Endothelial cell of umbilical vein (primary cell): ENCODE measurements at regions of chr11 and their contacts with region 1.

Region 1: DNA sequence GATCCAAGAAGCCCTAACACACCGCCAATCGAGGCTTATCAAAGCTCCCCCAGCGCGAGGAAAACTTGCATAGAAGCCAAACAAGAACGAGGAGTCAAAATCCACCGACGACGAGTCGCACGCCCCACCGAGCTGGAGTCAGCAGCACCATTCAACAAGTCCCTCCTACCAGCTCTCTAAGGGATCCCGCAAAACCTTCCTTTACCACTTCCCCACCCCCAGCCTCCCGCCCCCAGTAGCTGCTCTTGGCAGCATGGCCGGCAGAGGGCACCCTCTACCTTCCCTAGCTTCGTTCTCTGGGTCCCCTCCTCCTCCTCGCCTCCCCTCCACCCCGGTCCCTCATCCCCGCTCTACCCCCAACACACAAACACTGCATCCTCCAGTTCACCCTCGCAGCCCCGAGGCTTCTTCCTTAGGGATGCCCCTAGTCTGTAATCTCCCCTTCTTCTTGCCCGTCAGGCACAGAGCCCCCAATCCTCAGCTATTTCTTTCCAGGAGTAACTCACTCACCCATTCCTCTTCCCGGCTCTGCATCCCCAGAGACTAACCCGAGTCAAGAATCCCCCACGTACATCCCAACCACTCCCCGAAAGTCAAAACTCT is 1.3 kb downstream of the BDNF start:
- DNase-seq: peak; percentile 91
- H3K4me3 ChIP-seq: peak overlapping the region; percentile 75 to 92 (median 88)
- H3K27ac ChIP-seq: peak overlapping the region; percentile 60
- H3K4me1 ChIP-seq: peaks cover 19% of the 10 kb centered on the region
- H3K27me3 ChIP-seq: peaks cover 0 to 10% of the 10 kb centered on the region in 2 experiments
- CTCF ChIP-seq: peak; percentile 44 to 92
- POLR2A ChIP-seq: peak; percentile 65

Region 2: GRCh38 chr11:26377619-26378018 is 1321.4 kb before region 1 on chr11:
- CTCF ChIA-PET with region 1: no interaction called
- POLR2A ChIA-PET with region 1: no interaction called
- dilution Hi-C with region 1: no loop called
- intact Hi-C with region 1: no loop called
- DNase-seq: no peak
- H3K4me3 ChIP-seq: no peak overlapping the region
- H3K27ac ChIP-seq: no peak overlapping the region
- H3K4me1 ChIP-seq: no peaks in the 10 kb centered on the region
- H3K27me3 ChIP-seq: no peaks in the 10 kb centered on the region
- CTCF ChIP-seq: no peak
- POLR2A ChIP-seq: no peak

Region 3: GRCh38 chr11:27571156-27571825 is 127.7 kb before region 1 on chr11:
- CTCF ChIA-PET with region 1: no interaction called
- POLR2A ChIA-PET with region 1: no interaction called
- dilution Hi-C with region 1: no loop called
- intact Hi-C with region 1: no loop called
- DNase-seq: no peak
- H3K4me3 ChIP-seq: no peak overlapping the region
- H3K27ac ChIP-seq: no peak overlapping the region
- H3K4me1 ChIP-seq: no peaks in the 10 kb centered on the region
- H3K27me3 ChIP-seq: peaks cover 0 to 7% of the 10 kb centered on the region in 2 experiments
- CTCF ChIP-seq: no peak
- POLR2A ChIP-seq: no peak

Region 4: DNA sequence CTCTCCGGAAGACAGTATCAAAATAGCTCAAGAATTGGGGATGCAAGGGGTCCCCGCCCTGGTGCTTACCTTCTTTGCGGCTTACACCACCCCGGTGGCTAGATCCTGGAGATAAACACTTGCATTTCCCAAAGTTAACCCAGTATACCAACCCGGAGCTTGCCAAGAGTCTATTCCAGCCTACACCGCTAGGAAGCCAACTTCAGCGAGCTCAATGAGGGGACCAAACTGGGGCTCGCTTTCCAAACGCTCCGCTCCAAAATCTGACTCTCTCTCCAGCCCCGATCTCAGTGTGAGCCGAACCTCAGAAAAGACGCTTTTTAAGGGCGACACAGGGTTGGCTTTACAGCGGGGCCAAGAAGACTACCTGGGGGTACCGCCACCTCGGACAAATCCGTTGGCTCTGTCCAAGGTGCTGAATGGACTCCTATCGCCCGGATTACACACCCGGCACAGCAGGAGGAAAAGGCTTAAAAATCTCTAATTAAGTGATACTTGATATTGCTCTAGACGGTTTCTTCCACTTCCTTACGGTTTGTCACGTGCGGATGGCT is 21.4 kb after region 1 on chr11:
- CTCF ChIA-PET with region 1: interaction called, 109 read pairs
- POLR2A ChIA-PET with region 1: no interaction called
- dilution Hi-C with region 1: no loop called
- intact Hi-C with region 1: loop called (anchors 2 kb)
- DNase-seq: peak; percentile 52
- H3K4me3 ChIP-seq: no peak overlapping the region
- H3K27ac ChIP-seq: no peak overlapping the region
- H3K4me1 ChIP-seq: peaks cover 14% of the 10 kb centered on the region
- H3K27me3 ChIP-seq: peaks cover 50 to 80% of the 10 kb centered on the region in 2 experiments
- CTCF ChIP-seq: peak; percentile 8 to 20
- POLR2A ChIP-seq: no peak

Region 5: DNA sequence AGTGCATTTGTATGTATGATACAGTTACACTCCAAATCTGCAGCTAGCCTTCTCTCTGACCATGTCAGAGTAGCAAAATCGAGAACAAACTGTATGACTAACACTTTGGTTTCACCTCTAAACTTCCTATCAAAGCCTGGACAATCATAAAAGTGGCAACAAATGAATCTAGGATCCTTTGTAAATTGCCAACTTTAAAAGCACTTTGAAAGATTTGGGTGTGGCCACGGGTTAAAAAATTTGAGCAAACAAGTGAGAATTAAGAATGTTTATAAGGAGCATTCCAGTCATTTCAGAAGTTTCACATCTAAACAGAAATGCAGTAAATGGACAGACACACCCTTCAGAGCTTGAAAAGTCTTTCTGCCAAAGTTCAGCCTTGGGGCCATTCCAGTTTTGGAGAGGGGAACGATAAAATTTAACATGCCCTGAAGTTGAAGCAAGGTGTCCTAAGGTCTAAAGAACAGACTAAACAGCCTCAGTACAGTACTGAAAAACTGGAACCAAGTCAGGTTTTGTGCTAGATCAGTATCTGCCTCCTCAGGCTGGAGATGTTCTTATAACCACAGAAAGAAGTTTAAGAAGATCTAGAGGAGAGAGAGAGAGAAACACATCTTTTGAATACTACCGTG is 183.2 kb after region 1 on chr11:
- CTCF ChIA-PET with region 1: no interaction called
- POLR2A ChIA-PET with region 1: no interaction called
- dilution Hi-C with region 1: no loop called
- intact Hi-C with region 1: no loop called
- DNase-seq: no peak
- H3K4me3 ChIP-seq: no peak overlapping the region
- H3K27ac ChIP-seq: no peak overlapping the region
- H3K4me1 ChIP-seq: no peaks in the 10 kb centered on the region
- H3K27me3 ChIP-seq: peaks cover 3 to 10% of the 10 kb centered on the region in 2 experiments
- CTCF ChIP-seq: no peak
- POLR2A ChIP-seq: no peak

Region 6: GRCh38 chr11:28529540-28530410 is 830.8 kb after region 1 on chr11:
- CTCF ChIA-PET with region 1: interaction called, 168 read pairs
- POLR2A ChIA-PET with region 1: interaction called, 3 read pairs
- dilution Hi-C with region 1: no loop called
- intact Hi-C with region 1: loop called (anchors 1 kb)
- DNase-seq: peak; percentile 65
- H3K4me3 ChIP-seq: no peak overlapping the region
- H3K27ac ChIP-seq: no peak overlapping the region
- H3K4me1 ChIP-seq: no peaks in the 10 kb centered on the region
- H3K27me3 ChIP-seq: no peaks in the 10 kb centered on the region
- CTCF ChIP-seq: peak; percentile 15 to 25
- POLR2A ChIP-seq: no peak

Region 7: GRCh38 chr11:28743061-28743550 is 1044.1 kb after region 1 on chr11:
- CTCF ChIA-PET with region 1: interaction called, 8 read pairs
- POLR2A ChIA-PET with region 1: no interaction called
- dilution Hi-C with region 1: no loop called
- intact Hi-C with region 1: loop called (anchors 2 kb)
- DNase-seq: peak; percentile 91
- H3K4me3 ChIP-seq: no peak overlapping the region
- H3K27ac ChIP-seq: peak overlapping the region; percentile 70
- H3K4me1 ChIP-seq: peaks cover 45% of the 10 kb centered on the region
- H3K27me3 ChIP-seq: no peaks in the 10 kb centered on the region
- CTCF ChIP-seq: no peak
- POLR2A ChIP-seq: no peak

Region 8: GRCh38 chr11:29019960-29020683 is 1321.1 kb after region 1 on chr11:
- CTCF ChIA-PET with region 1: interaction called, 37 read pairs
- POLR2A ChIA-PET with region 1: interaction called, 6 read pairs
- dilution Hi-C with region 1: no loop called
- intact Hi-C with region 1: loop called (anchors 1 kb)
- DNase-seq: peak; percentile 80
- H3K4me3 ChIP-seq: no peak overlapping the region
- H3K27ac ChIP-seq: peak overlapping the region; percentile 97
- H3K4me1 ChIP-seq: peaks cover 31% of the 10 kb centered on the region
- H3K27me3 ChIP-seq: no peaks in the 10 kb centered on the region
- CTCF ChIP-seq: peak; percentile 50 to 70
- POLR2A ChIP-seq: peak; percentile 22

Region 9: DNA sequence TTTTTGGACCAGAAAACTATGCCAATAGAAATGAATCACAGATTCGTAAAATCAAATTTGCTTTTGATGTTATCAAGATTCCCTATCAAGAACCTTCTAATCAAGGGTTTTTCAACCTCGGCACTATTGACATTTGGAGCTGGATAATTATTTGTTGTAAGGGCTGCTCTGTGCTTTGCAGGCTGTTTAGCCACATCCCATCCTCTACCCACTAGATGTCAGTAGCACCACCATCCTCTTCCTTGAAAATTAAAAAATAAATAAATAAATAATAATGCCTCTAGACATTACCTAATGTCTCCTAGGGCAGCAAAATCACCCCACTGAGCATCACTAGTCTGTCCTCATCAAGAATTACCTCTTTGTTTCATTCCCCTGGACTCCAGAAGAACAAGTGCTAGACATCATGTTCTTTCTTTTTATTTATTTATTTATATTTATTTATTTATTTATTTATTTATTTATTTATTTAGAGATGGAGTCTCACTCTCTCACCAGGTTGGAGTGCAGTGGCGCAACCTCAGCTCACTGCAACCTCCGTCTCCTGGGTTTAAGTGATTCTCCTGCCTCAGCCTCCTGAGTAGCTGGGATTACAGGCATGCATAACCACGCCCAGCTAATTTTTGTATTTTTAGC is 1573.2 kb after region 1 on chr11:
- CTCF ChIA-PET with region 1: interaction called, 4 read pairs
- POLR2A ChIA-PET with region 1: no interaction called
- dilution Hi-C with region 1: no loop called
- intact Hi-C with region 1: loop called (anchors 5 kb)
- DNase-seq: peak; percentile 59
- H3K4me3 ChIP-seq: no peak overlapping the region
- H3K27ac ChIP-seq: no peak overlapping the region
- H3K4me1 ChIP-seq: no peaks in the 10 kb centered on the region
- H3K27me3 ChIP-seq: no peaks in the 10 kb centered on the region
- CTCF ChIP-seq: peak in 1 of 2 donors; percentile 54
- POLR2A ChIP-seq: no peak

Region 10: GRCh38 chr11:29333993-29334775 is 1635.2 kb after region 1 on chr11:
- CTCF ChIA-PET with region 1: interaction called, 133 read pairs
- POLR2A ChIA-PET with region 1: no interaction called
- dilution Hi-C with region 1: no loop called
- intact Hi-C with region 1: loop called (anchors 1 kb)
- DNase-seq: peak; percentile 61
- H3K4me3 ChIP-seq: no peak overlapping the region
- H3K27ac ChIP-seq: peak overlapping the region; percentile 5
- H3K4me1 ChIP-seq: no peaks in the 10 kb centered on the region
- H3K27me3 ChIP-seq: no peaks in the 10 kb centered on the region
- CTCF ChIP-seq: peak; percentile 24 to 34
- POLR2A ChIP-seq: no peak